ENCODE measurements at regions of chr5 and their contacts with region 1.

Region 1: DNA sequence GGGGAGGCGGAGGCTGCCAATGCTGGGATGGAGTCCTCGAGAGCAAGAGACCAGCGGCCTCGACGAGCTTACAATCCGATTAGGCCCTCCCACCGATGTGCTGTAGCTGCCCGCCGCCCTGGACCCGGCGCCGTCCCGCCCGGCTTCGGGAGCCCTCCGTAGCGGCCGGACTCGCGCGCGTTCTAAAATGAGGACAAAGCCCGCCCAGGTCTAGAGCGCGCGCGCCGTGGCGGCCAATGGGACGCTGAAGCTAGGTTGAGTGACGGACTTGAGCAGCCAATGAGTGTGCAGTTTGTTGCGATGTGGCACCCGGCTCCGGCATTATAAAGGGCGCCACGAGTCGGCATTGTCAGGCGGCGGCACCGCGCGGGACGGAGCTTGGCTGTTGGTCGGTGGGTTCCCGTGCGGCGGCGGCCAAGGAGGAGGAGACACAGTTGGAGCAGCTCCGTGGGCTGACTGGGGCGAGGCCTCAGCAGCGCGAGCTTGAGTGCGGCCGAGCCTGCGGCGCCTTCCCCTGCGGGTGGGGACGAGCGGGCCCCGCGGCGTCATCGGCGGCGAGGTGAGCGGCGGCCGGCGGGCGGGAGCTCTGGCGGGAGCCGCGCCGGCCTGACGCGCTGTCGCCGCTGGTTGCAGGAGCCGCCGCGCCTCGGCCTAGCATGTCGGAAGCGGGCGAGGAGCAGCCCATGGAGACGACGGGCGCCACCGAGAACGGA is at the start of gene HNRNPAB:
- DNase-seq: peak; percentile 92 to 99 (median 97)

Region 2: DNA sequence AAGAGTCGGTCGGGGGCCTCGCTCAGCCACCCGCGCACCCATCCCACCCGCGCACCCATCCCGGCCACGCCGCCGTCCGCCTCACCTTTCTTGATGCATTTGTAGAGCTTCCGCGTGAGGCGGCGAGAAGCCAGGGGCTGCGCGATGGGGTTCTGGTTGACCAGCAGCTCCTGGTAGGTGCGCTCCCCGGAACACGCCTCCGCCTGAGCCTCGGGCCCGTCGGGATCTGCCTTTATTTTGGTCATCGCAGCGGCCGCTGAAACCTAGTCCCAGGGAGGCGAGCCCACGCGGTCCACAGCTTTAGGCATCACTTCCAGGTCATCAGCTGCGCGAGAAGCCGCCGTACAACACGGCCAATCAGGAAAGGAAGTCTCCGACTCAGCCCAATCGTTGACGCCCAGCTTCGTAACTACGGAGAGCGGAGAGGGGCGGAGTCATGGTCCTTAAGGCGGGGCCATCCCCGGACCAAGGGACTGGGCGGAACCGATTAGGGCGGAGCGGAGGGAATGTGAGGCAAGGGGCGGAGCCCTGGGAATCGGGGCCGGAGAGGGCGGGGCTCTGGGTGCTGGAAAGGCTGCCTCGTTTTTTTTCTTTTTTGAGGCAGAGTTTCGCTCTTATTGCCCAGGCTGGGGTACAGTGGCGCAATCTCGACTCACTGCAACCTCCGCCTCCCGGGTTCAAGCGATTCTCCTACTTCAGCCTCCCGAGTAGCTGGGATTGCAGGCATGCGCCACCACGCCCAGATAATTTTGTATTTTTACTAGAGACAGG is 50.6 kb before region 1 on chr5 and contains the start of gene NHP2:
- intact Hi-C with region 1: loop called (anchors 10 kb)
- DNase-seq: peak; percentile 98 to 100 (median 99)

Region 3: GRCh38 chr5:178241231-178241663 is 36.9 kb after region 1 on chr5:
- intact Hi-C with region 1: no loop called
- DNase-seq: peak in 36 of 42 donors; percentile 11 to 70 (median 45)

Region 4: GRCh38 chr5:178261666-178262606 is 57.6 kb after region 1 on chr5:
- intact Hi-C with region 1: no loop called
- DNase-seq: no peak

Measured in head of caudate nucleus (tissue), 42 donors.